Head of caudate nucleus (tissue), 42 donors: ENCODE measurements at regions of chr1 and their contacts with region 1.

Region 1: DNA sequence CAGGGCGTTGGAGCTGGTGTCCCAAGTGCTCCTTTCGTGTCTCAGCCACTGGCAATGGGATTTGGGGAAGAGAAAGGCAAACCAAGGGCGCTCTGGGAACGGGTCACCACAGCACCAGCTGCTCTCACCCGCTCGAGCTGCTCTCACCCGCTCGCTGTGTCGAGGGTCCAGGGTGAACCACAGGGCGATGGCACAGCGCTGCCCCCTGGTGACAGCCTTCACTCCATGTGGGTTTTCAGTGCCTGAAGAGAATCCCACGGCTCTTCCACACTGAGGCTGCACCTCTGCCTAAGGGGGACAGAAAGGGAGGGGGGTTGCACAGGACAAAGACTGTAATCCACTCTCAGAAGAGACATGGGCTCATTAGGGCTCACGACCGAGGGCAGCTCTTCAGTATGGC is 7.1 kb upstream of the CLDN19 start:
- DNase-seq: peak in 38 of 42 donors; percentile 18 to 80 (median 57)

Region 2: DNA sequence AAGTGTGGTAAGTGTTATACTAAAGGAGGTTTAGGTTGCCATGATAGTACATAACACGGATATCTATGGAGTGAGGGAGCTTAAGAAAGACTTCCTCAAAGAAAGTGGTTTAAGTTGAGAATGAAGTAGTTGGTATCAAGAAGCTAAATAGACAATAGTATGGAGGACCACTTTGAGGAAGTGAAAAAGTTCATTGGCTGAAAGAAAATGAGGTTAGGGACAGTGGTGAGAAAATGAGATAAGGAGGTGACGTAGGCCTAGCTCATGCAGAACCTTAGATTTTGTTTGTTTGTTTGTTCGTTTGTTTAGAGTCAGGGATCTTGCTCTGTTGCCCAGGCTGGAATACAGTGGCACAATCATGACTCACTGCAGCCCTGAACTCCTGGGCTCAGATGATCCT is 161.1 kb before region 1 on chr1:
- intact Hi-C with region 1: loop called (anchors 10 kb)
- DNase-seq: no peak